ENCODE measurements at regions of chr10 and their contacts with region 1.

Region 1: DNA sequence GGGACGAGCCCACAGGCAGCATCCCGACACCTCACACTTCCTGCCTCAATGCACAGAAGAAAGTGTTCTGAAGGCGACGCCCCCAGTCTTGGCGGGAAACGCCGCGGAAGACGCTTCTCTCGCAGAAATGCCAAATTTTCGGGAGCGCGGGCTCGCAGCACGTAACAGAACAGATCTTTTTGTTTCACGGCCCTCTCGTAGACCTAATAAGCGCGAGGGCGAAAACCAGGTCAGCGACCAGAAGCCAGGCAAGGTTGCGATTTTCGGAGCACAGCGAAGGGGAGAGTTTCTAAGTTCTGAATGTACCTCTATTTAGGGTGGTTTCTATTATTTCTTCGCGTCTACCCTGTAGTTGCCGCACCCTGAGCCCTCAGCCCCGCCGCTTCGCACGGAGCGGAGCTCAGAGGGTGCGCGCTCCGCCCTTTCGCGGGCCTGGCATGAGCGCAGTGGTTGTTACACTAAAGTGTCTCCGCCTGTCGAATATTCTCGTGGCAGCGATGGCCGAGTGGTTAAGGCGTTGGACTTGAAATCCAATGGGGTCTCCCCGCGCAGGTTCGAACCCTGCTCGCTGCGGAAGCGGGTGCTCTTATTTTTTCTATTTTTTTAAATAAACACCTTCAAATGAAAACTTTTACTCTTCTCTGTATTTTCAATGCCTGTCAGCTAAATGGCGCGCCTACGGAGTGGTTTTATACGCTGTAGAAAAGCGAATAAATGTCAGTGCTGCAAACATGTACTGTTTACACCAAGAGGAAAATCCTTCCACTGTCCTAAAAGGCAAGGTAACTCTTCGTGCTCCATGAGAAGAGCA is 68.2 kb upstream of the CTNNA3 start:
- DNase-seq: peak; percentile 96 to 100 (median 97)
- ATAC-seq: peak; percentile 80
- H3K4me3 ChIP-seq: peak overlapping the region; percentile 83 to 92
- H3K4me3 Mint-ChIP-seq: peak overlapping the region; percentile 92
- H3K27ac ChIP-seq: peak overlapping the region; percentile 84 to 89
- H3K27ac Mint-ChIP-seq: peak overlapping the region; percentile 97
- H3K4me1 ChIP-seq: no peaks in the 10 kb centered on the region
- H3K4me1 Mint-ChIP-seq: peaks cover 8% of the 10 kb centered on the region
- H3K27me3 ChIP-seq: no peaks in the 10 kb centered on the region
- H3K27me3 Mint-ChIP-seq: peaks cover 2% of the 10 kb centered on the region
- CTCF ChIP-seq: no peak

Region 2: GRCh38 chr10:67612577-67613537 is 151.4 kb before region 1 on chr10:
- CTCF ChIA-PET with region 1: no interaction called
- POLR2A ChIA-PET with region 1: no interaction called
- intact Hi-C with region 1: loop called (anchors 5 kb)
- DNase-seq: peak in 8 of 9 experiments; percentile 24 to 84 (median 56)
- ATAC-seq: peak; percentile 96
- H3K4me3 ChIP-seq: no peak overlapping the region
- H3K4me3 Mint-ChIP-seq: peak overlapping the region; percentile 67
- H3K27ac ChIP-seq: peak overlapping the region in 1 of 2 experiments; percentile 22
- H3K27ac Mint-ChIP-seq: peak overlapping the region; percentile 79
- H3K4me1 ChIP-seq: peaks cover 23% of the 10 kb centered on the region
- H3K4me1 Mint-ChIP-seq: peaks cover 27% of the 10 kb centered on the region
- H3K27me3 ChIP-seq: no peaks in the 10 kb centered on the region
- H3K27me3 Mint-ChIP-seq: peaks cover 2% of the 10 kb centered on the region
- CTCF ChIP-seq: no peak

Region 3: DNA sequence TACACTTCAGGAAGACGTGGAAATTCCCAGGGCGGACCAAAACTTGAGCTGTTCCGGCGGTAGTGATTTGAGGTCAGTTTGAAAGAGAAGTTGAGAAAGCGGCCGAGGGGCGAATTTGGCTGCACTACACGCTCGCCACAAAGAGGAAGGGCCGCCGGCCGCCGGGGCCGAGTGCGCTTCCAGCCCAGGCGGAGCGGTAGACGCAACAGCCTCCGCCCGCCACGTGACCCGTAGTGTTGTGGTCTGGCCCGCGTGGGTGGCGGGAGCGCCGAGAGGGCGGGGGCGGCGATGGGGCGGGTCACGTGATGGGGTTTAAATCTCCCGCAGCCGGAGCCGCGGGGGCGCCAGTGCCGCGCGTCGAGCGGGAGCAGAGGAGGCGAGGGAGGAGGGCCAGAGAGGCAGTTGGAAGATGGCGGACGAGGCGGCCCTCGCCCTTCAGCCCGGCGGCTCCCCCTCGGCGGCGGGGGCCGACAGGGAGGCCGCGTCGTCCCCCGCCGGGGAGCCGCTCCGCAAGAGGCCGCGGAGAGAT is 120.2 kb after region 1 on chr10 and contains the start of gene SIRT1:
- CTCF ChIA-PET with region 1: no interaction called
- POLR2A ChIA-PET with region 1: interaction called, 5 read pairs
- intact Hi-C with region 1: loop called in 1 of 2 experiments (anchors 1 kb)
- DNase-seq: peak; percentile 84 to 97 (median 94)
- ATAC-seq: peak; percentile 72
- H3K4me3 ChIP-seq: peak within 1 kb of the TSS; percentile 69 to 70
- H3K4me3 Mint-ChIP-seq: peak within 1 kb of the TSS; percentile 89
- H3K27ac ChIP-seq: peak within 1 kb of the TSS; percentile 57 to 89
- H3K27ac Mint-ChIP-seq: peak within 1 kb of the TSS; percentile 94
- H3K4me1 ChIP-seq: peaks cover 23% of the 10 kb centered on the region
- H3K4me1 Mint-ChIP-seq: peaks cover 35% of the 10 kb centered on the region
- H3K27me3 ChIP-seq: no peaks in the 10 kb centered on the region
- H3K27me3 Mint-ChIP-seq: no peaks in the 10 kb centered on the region
- CTCF ChIP-seq: no peak
- total RNA-seq, gene SIRT1: 72.6 to 74.5 TPM

Region 4: DNA sequence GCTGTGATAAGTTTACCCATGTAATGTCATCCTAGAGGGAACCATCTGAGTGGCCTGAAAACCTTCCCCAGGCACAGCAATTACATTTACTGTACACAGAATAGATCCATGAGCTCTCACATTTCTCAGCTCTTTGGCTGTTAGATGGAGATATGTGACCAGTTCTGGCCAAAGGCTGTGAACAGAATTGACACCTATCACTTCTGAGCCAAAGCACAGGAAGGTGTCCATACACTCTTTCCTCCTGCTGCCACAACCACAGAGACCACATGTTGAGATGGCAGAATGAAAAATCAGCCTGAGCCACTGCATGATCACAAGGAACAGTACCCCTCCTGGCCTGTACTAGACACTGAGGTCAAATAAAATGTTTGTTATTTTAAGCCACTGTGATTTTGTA is 512.0 kb after region 1 on chr10:
- CTCF ChIA-PET with region 1: no interaction called
- POLR2A ChIA-PET with region 1: no interaction called
- intact Hi-C with region 1: no loop called
- DNase-seq: no peak
- ATAC-seq: no peak
- H3K4me3 ChIP-seq: no peak overlapping the region
- H3K4me3 Mint-ChIP-seq: no peak overlapping the region
- H3K27ac ChIP-seq: no peak overlapping the region
- H3K27ac Mint-ChIP-seq: no peak overlapping the region
- H3K4me1 ChIP-seq: no peaks in the 10 kb centered on the region
- H3K4me1 Mint-ChIP-seq: no peaks in the 10 kb centered on the region
- H3K27me3 ChIP-seq: no peaks in the 10 kb centered on the region
- H3K27me3 Mint-ChIP-seq: no peaks in the 10 kb centered on the region
- CTCF ChIP-seq: no peak

Region 5: DNA sequence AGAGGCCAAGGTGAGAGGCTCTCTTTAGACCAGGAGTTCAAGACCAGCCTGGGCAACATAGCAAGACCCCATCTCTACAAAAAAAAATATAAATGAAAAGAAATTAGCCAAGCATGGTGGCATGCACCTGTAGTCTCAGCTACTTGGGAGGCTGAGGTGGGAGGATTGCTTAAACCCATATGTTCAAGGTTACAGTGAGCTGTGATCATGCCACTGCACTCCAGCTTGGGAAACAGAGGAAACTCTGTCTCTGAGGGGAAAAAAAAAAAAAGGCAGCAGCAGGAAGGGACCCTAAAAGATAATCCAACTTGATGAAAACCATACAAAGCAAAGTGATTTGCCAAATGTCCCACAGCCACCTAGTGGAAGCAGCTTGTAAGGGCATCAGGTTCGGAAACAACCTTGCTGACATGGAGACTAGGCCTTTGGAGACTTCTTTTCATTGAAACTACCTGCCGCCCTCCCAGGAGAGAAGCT is 584.1 kb after region 1 on chr10:
- CTCF ChIA-PET with region 1: no interaction called
- POLR2A ChIA-PET with region 1: no interaction called
- intact Hi-C with region 1: loop called in 1 of 2 experiments (anchors 10 kb)
- DNase-seq: peak in 8 of 9 experiments; percentile 6 to 76 (median 46)
- ATAC-seq: peak; percentile 90
- H3K4me3 ChIP-seq: no peak overlapping the region
- H3K4me3 Mint-ChIP-seq: no peak overlapping the region
- H3K27ac ChIP-seq: peak overlapping the region in 1 of 2 experiments; percentile 33
- H3K27ac Mint-ChIP-seq: peak overlapping the region; percentile 76
- H3K4me1 ChIP-seq: no peaks in the 10 kb centered on the region
- H3K4me1 Mint-ChIP-seq: peaks cover 6% of the 10 kb centered on the region
- H3K27me3 ChIP-seq: no peaks in the 10 kb centered on the region
- H3K27me3 Mint-ChIP-seq: no peaks in the 10 kb centered on the region
- CTCF ChIP-seq: peak; percentile 79

Measured in CD8-positive, alpha-beta T cell (primary cell).